ENCODE measurements at regions of chr4 and their contacts with region 1.

Region 1: DNA sequence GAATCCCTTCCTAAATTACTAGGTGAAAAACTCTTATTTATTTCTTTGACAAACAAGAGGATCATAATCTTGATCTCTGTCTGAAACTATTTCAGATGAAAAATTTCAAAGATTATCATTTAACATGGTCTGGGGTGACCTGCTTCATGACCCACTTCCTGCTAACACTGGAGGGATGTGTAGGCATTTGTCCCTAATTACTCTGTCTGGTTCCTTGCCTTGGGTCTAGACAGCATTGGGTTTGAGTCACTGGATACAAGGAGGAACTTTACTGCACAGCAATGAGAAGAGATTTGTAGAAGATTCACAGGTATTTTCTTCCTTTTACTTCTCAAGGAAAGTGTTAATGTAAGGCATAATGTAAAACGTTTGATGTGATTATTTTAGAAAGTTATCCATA is 67.9 kb downstream of the LEF1 start:
- DNase-seq: no peak
- ATAC-seq: no peak
- H3K4me3 Mint-ChIP-seq: peak overlapping the region; percentile 41
- H3K27ac Mint-ChIP-seq: peak overlapping the region; percentile 72
- H3K4me1 Mint-ChIP-seq: peaks cover 86% of the 10 kb centered on the region
- H3K27me3 Mint-ChIP-seq: no peaks in the 10 kb centered on the region
- CTCF ChIP-seq: no peak

Region 2: GRCh38 chr4:107989537-107990386 is 111.1 kb before region 1 on chr4 and contains the start of gene HADH:
- CTCF ChIA-PET with region 1: no interaction called
- POLR2A ChIA-PET with region 1: no interaction called
- intact Hi-C with region 1: no loop called
- DNase-seq: peak; percentile 95
- ATAC-seq: peak; percentile 98
- H3K4me3 Mint-ChIP-seq: peak within 1 kb of the TSS; percentile 81
- H3K27ac Mint-ChIP-seq: peak within 1 kb of the TSS; percentile 92
- H3K4me1 Mint-ChIP-seq: peaks cover 39% of the 10 kb centered on the region
- H3K27me3 Mint-ChIP-seq: no peaks in the 10 kb centered on the region
- CTCF ChIP-seq: no peak
- total RNA-seq, gene HADH: 50.3 to 50.7 TPM

Region 3: DNA sequence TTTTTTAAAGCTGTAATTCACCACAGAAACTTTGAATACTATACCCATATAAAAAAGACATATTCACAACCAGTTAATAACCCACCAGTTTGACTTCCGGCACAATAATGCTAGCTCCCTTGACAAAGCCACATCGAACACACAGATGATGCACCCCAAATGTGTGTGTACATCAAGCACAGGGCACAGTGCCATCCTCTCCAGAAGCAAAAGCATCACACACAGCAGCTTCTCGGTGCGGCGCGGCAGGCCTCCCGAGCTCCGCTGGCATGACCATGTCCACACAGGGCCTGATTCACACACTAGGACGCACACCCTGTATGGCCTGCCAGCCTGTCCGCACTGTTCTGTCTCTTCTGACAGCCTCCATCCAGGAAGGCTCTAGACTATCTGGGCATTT is 20.1 kb before region 1 on chr4:
- CTCF ChIA-PET with region 1: interaction called, 20 read pairs
- POLR2A ChIA-PET with region 1: interaction called, 4 read pairs
- intact Hi-C with region 1: no loop called
- DNase-seq: peak; percentile 68
- ATAC-seq: peak; percentile 70
- H3K4me3 Mint-ChIP-seq: peak overlapping the region; percentile 77
- H3K27ac Mint-ChIP-seq: peak overlapping the region; percentile 95
- H3K4me1 Mint-ChIP-seq: peaks cover 72% of the 10 kb centered on the region
- H3K27me3 Mint-ChIP-seq: no peaks in the 10 kb centered on the region
- CTCF ChIP-seq: no peak

Measured in activated CD8-positive, alpha-beta T cell treated with anti-CD3 and anti-CD28 coated beads for 36 hours (primary cell).